ENCODE measurements at regions of chr22 and their contacts with region 1.

Region 1: GRCh38 chr22:48889887-48890692 is 937.6 kb downstream of the BRD1 start:
- DNase-seq: peak in 1 of 5 donors; percentile 3
- H3K4me3 ChIP-seq: no peak overlapping the region
- H3K27ac ChIP-seq: no peak overlapping the region
- H3K4me1 ChIP-seq: no peaks in the 10 kb centered on the region
- H3K27me3 ChIP-seq: no peaks in the 10 kb centered on the region
- CTCF ChIP-seq: no peak
- EP300 ChIP-seq: no peak
- POLR2A ChIP-seq: no peak

Region 2: DNA sequence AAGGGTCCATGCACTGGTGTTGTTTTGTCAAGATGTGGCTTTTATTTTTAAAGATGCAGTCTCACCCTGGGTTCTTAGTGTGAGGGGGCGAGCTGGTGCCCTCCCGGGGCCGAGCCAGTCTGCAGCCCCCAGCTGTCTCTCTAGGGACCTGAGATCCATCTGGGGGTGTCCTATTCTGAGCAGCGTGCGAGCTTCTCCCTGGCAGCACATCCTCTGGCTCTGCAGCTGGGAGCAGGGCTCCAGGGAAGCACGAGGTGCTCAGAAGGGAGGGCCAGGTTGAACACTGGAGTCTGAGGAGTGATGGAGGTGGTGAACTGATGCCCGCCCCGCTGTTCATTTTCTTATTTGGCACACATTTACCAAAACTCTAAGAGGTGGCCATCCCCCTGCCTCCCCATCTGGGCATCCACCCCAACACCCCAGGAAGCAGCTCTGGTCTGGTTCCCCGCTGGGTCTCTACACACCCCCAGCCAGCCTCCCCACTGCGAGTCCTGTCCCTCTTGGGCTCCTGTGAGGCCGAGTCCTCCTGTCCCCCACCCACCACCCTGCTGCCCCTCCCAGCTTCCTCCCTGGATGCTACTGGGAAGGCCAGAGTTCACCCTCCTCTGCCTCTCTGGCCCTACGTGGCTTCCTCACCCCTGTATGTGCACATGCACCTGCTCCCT is 18.8 kb before region 1 on chr22:
- intact Hi-C with region 1: loop called in 1 of 4 experiments (anchors 2 kb)
- DNase-seq: no peak
- H3K4me3 ChIP-seq: no peak overlapping the region
- H3K27ac ChIP-seq: no peak overlapping the region
- H3K4me1 ChIP-seq: no peaks in the 10 kb centered on the region
- H3K27me3 ChIP-seq: no peaks in the 10 kb centered on the region
- CTCF ChIP-seq: no peak
- EP300 ChIP-seq: no peak
- POLR2A ChIP-seq: no peak

Region 3: GRCh38 chr22:48929276-48929790 is 39.2 kb after region 1 on chr22:
- intact Hi-C with region 1: no loop called
- DNase-seq: no peak
- H3K4me3 ChIP-seq: no peak overlapping the region
- H3K27ac ChIP-seq: no peak overlapping the region
- H3K4me1 ChIP-seq: no peaks in the 10 kb centered on the region
- H3K27me3 ChIP-seq: no peaks in the 10 kb centered on the region
- CTCF ChIP-seq: no peak
- EP300 ChIP-seq: no peak
- POLR2A ChIP-seq: no peak

Measured in ovary (tissue), 10 donors.